Cardiac septum (tissue), 1 donor: ENCODE measurements at regions of chr12 and their contacts with region 1.

Region 1: DNA sequence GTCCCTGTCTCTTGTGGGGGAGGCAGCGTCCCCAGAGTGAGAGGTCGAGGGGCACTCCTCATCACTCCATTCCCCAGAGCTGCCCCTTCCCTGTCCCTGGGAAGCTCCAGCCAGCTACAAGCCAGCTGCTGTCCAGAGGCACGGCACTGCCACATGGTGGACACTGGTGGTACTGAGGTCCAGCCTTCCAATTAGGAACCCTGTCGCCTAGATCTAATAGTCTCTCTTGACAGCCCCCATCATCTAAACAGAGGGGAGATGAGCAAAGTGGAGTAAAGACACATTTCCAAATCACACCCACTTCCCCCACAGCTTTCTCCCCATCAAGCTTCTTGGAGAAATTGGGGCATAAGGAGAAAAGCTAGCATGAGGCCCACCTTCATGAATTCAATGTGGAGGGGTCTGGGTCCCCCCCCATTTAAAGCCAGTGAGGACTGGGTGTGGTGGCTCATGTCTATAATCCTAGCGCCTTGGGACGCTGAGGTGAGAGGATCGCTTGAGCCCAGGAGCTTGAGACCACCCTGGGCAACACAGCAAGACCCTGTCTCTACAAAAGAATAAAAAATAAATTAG is 2.1 kb upstream of the INHBE start:
- DNase-seq: peak; percentile 90

Region 2: DNA sequence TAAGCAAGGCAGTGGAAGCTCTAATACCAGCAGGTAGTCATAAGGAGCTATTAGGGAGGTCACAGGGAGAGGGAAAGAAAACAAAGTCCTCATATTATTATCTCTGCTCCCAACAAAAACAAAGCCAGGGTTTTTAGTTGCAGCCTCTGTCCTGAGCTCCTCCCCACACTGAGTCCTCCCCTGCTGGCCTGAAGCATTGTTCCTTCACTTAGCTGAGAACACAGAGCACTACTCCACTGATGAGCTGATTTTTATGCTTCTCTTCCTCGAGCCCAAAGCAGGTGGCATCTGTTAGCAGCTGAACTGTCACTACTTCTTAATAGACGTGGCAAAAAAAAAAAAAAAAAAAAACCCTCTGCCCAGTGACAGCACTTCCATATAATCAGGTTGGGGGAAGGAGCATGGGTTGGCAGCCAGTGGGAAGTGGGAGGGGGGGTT is 191.6 kb before region 1 on chr12:
- intact Hi-C with region 1: loop called (anchors 5 kb)
- DNase-seq: no peak

Region 3: DNA sequence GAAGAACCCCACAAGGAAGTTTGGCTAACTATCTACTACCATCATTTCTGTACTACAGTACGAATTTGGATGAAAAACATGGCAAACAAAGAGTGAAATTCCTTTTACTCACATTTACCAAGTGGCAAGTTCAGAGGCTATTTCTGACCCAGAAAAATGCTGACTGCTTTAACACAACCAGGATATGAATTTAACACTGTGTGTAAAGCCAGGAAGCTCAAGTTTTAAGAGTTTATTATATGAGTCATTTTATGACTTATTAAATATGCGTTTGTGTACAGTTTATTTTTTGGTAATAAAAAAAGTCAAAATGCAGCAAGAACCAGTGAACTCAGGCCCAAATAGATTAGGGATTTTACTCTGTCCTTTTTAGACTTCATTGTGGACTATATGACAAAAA is 143.6 kb before region 1 on chr12:
- intact Hi-C with region 1: loop called (anchors 1 kb)
- DNase-seq: no peak

Region 4: DNA sequence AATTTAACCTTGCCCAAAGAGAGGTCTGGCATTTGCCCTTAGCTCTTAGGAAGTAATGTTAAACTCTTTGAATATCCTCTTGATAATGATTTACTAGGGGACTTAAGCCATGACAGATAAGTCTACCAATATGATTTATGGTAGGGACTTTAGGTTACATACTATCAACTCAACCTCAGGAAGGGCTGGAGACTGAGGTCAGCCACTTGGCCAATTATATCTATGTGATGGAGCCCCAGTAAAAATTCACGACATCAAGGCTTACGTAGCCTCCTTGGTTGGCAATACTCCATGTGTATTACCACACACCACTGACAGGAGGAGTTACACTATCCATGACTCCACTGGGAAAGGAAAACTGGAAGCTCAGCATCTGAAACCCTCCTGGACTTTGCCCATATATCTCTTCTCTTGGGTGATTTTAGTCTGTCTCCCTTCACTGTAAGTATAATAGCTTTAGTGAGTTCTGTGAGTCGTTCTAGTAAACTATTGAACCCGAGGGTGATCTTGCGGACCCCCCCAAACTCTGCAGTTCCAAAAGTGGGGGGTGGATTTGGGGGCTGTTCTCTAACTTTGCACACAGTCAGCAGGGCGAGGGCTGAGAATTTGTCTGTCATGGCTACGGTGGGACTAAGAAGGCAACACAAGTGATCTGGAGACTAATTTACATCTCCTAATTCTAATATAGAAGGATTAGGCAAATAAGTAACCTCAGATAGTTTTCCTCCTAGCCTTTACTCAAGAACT is 84.5 kb before region 1 on chr12:
- intact Hi-C with region 1: no loop called
- DNase-seq: no peak

Region 5: GRCh38 chr12:57389033-57389432 is 64.0 kb before region 1 on chr12:
- intact Hi-C with region 1: no loop called
- DNase-seq: no peak

Region 6: DNA sequence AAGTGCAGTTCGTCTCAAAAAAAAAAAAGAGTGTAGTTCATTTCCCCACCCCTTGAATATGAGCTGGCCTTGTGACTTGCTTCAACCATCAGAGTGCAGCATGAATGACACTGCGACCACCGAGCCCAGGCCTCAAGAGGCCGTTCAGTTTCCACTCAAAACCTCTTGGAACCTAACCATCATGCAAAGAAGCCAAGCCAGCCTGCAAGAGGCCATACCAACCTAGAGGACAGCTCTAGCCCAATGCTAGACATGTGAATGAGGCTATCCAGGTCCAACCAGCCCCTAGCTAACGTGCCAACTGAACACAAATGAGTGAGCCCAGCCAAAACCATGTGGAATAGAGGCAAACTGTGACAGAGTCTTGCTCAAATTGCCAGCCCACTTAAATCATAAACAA is 51.9 kb before region 1 on chr12:
- intact Hi-C with region 1: no loop called
- DNase-seq: no peak

Region 7: GRCh38 chr12:57416039-57416996 is 36.7 kb before region 1 on chr12:
- intact Hi-C with region 1: no loop called
- DNase-seq: no peak

Region 8: DNA sequence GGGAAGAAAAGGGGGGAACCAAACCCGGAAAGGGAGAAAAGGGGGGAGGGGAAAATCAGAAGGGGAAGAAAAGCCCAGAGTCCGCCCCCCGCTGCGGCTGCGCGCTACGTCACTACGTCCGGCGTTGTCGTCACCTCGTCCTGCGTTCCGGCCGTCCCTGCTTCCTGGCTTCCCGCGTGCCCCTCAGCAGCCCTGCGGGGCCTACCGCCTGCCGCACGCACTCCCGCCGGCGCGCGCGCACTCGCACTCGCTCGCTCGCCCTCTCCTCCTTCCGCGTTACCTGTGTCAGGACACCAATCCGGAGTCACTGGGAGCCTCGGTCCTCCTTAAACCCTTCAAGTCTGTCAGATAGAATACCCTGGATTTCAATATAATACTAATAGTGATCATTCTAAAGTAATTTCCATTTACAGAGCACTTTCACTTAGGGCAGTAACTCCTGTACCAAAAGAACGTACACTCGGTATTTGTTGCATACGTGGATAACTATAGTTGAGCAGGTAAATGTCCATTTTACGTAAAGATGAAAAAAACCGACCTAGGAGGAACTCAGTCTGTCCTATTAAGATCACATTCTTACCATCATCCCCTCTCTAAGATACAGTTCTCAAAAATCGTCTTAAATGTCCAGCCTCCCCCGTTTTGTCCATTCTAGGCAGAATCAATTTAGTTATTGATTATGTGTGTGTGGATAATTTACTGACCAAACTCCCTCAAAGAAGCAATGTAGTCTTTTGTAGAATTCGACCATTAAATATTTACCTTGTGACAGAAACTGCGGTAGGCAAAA is 21.9 kb before region 1 on chr12 and contains the start of gene R3HDM2:
- intact Hi-C with region 1: loop called (anchors 2 kb)
- DNase-seq: peak; percentile 98
- total RNA-seq, gene R3HDM2: 77.7 TPM